Ascending aorta (tissue), 2 donors: ENCODE measurements at regions of chr3 and their contacts with region 1.

Region 1: GRCh38 chr3:128322066-128323022 is 144.3 kb downstream of the DNAJB8 start:
- DNase-seq: peak in 1 of 2 donors; percentile 63
- H3K4me3 ChIP-seq: no peak overlapping the region
- H3K27ac ChIP-seq: no peak overlapping the region
- H3K4me1 ChIP-seq: no peaks in the 10 kb centered on the region
- H3K27me3 ChIP-seq: no peaks in the 10 kb centered on the region
- CTCF ChIP-seq: peak; percentile 19 to 36 (median 22)

Region 2: GRCh38 chr3:128170805-128171516 is 151.4 kb before region 1 on chr3:
- intact Hi-C with region 1: loop called (anchors 5 kb)
- DNase-seq: no peak
- H3K4me3 ChIP-seq: no peak overlapping the region
- H3K27ac ChIP-seq: no peak overlapping the region
- H3K4me1 ChIP-seq: no peaks in the 10 kb centered on the region
- H3K27me3 ChIP-seq: no peaks in the 10 kb centered on the region
- CTCF ChIP-seq: peak; percentile 47 to 66 (median 63)

Region 3: DNA sequence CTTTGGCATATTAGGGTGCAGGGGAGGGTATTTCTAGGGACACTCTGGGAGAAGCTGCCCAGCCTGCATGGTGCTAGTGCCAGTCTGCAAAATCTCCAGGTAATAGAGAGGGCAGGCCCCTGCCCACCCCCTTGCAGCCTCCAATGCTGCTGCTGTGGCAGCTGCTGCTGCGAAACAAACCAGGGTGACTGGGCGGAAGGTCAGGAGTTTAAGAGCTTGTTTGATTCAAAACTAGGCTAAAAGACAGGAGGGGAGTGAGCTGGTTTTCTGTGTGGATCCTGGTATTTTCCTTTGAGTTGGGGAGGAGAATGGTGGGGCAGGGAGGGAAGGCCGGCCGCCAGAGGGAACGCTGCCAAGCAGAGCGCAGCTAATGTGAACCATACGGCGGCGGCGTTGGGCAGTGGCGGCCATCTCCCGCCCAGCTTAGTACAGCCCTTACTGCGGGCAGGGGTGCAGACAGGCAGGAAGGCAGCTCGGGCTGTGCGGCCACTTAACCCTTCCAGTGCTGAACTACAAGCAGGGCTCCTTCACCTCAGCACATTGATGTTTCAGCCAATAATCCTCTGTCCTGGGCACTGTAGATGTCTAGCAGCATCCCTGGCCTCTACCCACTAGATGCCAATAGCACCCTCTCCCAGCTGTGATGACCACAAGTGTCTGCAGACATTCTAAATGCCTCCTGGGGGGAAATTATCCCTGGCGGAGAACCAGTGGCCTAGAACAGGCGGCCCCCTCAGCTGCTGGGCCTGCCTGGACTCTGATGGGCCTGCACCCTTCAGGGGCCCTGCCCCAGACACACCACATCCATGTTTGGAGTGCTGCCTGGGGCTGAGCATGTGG is 43.4 kb before region 1 on chr3:
- intact Hi-C with region 1: no loop called
- DNase-seq: peak in 1 of 2 donors; percentile 66
- H3K4me3 ChIP-seq: peak overlapping the region; percentile 10 to 31
- H3K27ac ChIP-seq: no peak overlapping the region
- H3K4me1 ChIP-seq: peaks cover 0 to 21% of the 10 kb centered on the region in 2 donors
- H3K27me3 ChIP-seq: no peaks in the 10 kb centered on the region
- CTCF ChIP-seq: no peak